ENCODE measurements at regions of chr4 and their contacts with region 1.

Region 1: GRCh38 chr4:86927843-86928395 is 6.9 kb upstream of the AFF1 start:
- DNase-seq: no peak
- ATAC-seq: peak; percentile 49 to 93 (median 85)
- H3K4me3 ChIP-seq: no peak overlapping the region
- H3K27ac ChIP-seq: peak overlapping the region in 1 of 3 donors; percentile 43
- H3K4me1 ChIP-seq: peaks cover 0 to 4% (median 0%) of the 10 kb centered on the region in 4 donors
- H3K27me3 ChIP-seq: no peaks in the 10 kb centered on the region
- CTCF ChIP-seq: no peak
- POLR2A ChIP-seq: no peak

Region 2: DNA sequence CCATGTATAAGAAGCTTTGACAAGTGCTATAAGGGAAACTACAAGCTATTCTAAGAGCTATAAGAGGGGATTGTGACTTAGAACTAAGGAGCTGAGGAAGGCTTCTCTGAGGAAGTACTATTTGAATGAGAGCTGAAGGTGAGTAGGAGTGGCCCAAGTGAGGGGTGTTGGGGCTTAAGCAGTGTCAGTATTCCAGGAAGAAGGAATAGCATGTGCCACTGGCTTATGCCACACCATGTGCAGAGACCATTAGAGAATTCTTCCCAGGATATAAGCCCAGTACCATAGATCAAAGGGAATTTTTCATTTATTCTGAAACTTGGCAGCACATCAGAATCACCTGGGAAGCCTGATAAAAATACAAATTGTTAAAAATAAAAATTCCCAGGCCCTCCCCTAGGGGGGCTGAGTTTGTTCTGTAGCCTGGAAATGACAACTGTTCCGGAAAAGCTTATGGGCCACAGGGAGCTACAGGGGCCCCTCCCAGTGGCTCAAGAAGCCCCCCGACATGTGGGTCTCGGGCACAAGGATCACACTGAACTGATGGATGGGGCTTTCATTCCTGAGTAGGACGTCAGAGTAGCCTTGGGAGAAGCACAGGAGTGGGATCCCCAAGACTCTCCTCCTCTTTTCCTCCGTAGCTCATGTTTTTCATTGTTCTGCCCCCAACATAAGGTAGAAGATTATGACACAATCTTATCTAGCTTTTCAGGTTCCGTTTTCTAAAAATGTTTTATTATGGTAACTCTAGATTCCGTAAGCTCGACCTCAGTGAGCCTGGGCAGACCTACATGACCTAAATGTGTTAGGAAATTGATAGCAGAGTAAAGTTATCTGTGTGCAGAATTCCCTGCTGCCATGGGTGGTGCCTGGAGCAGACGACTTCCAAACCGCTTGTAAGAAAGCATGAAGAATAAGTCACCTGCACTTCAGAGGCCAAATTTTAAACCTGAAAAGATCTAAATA is 126.2 kb after region 1 on chr4:
- intact Hi-C with region 1: no loop called
- DNase-seq: no peak
- ATAC-seq: peak; percentile 59 to 74 (median 70)
- H3K4me3 ChIP-seq: no peak overlapping the region
- H3K27ac ChIP-seq: peak overlapping the region in 1 of 3 donors; percentile 5
- H3K4me1 ChIP-seq: peaks cover 0 to 47% (median 8%) of the 10 kb centered on the region in 4 donors
- H3K27me3 ChIP-seq: no peaks in the 10 kb centered on the region
- CTCF ChIP-seq: peak in 1 of 4 donors; percentile 7
- POLR2A ChIP-seq: no peak

Region 3: GRCh38 chr4:87093443-87094123 is 165.7 kb after region 1 on chr4:
- intact Hi-C with region 1: loop called (anchors 10 kb)
- DNase-seq: no peak
- ATAC-seq: peak; percentile 67 to 80 (median 72)
- H3K4me3 ChIP-seq: no peak overlapping the region
- H3K27ac ChIP-seq: no peak overlapping the region
- H3K4me1 ChIP-seq: peaks cover 0 to 29% (median 6%) of the 10 kb centered on the region in 4 donors
- H3K27me3 ChIP-seq: no peaks in the 10 kb centered on the region
- CTCF ChIP-seq: peak; percentile 58 to 64 (median 58)
- POLR2A ChIP-seq: no peak